CD8-positive, alpha-beta T cell (primary cell): ENCODE measurements at regions of chr14 and their contacts with region 1.

Region 1: GRCh38 chr14:99266181-99267178 is 5.5 kb downstream of the BCL11B start:
- DNase-seq: peak; percentile 85 to 93 (median 91)
- ATAC-seq: peak; percentile 24
- H3K4me3 ChIP-seq: peak overlapping the region; percentile 87 to 88
- H3K4me3 Mint-ChIP-seq: peak overlapping the region; percentile 100
- H3K27ac ChIP-seq: peak overlapping the region; percentile 96 to 97
- H3K27ac Mint-ChIP-seq: peak overlapping the region; percentile 100
- H3K4me1 ChIP-seq: peaks cover 40% of the 10 kb centered on the region
- H3K4me1 Mint-ChIP-seq: peaks cover 64% of the 10 kb centered on the region
- H3K27me3 ChIP-seq: no peaks in the 10 kb centered on the region
- H3K27me3 Mint-ChIP-seq: no peaks in the 10 kb centered on the region
- CTCF ChIP-seq: peak; percentile 99

Region 2: DNA sequence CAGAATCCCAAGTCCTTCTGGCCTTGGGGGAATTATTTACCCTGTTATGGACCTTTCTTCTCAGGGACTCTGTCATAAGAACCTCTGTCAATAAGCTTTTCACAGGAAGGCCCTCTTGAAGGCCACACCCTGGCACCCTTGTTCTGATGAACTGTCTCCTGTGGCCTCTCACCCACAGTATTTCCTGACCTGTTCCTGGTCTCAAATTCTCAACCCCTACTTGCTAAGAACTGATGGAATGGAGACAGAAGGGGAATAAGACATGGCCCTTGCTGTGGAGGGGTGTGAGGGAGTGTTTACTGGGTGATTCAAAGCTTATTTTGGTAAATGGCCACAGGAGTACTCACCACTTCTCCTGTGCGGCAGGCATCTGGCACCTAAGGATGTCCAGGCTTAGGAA is 1077.4 kb before region 1 on chr14:
- CTCF ChIA-PET with region 1: interaction called, 7 read pairs
- POLR2A ChIA-PET with region 1: interaction called, 10 read pairs
- intact Hi-C with region 1: loop called in 1 of 2 experiments (anchors 2 kb)
- DNase-seq: peak in 3 of 9 experiments; percentile 47 to 71 (median 70)
- ATAC-seq: peak; percentile 34
- H3K4me3 ChIP-seq: peak overlapping the region; percentile 13 to 20
- H3K4me3 Mint-ChIP-seq: peak overlapping the region; percentile 67
- H3K27ac ChIP-seq: peak overlapping the region; percentile 78 to 81
- H3K27ac Mint-ChIP-seq: peak overlapping the region; percentile 95
- H3K4me1 ChIP-seq: peaks cover 99% of the 10 kb centered on the region
- H3K4me1 Mint-ChIP-seq: peaks cover 98% of the 10 kb centered on the region
- H3K27me3 ChIP-seq: no peaks in the 10 kb centered on the region
- H3K27me3 Mint-ChIP-seq: no peaks in the 10 kb centered on the region
- CTCF ChIP-seq: no peak

Region 3: GRCh38 chr14:98444077-98444476 is 822.4 kb before region 1 on chr14:
- CTCF ChIA-PET with region 1: no interaction called
- POLR2A ChIA-PET with region 1: interaction called, 3 read pairs
- intact Hi-C with region 1: loop called (anchors 1 to 5 kb)
- DNase-seq: peak; percentile 9 to 79 (median 51)
- ATAC-seq: peak; percentile 95
- H3K4me3 ChIP-seq: peak overlapping the region in 1 of 2 experiments; percentile 18
- H3K4me3 Mint-ChIP-seq: peak overlapping the region; percentile 68
- H3K27ac ChIP-seq: peak overlapping the region; percentile 67 to 78
- H3K27ac Mint-ChIP-seq: peak overlapping the region; percentile 100
- H3K4me1 ChIP-seq: peaks cover 38% of the 10 kb centered on the region
- H3K4me1 Mint-ChIP-seq: peaks cover 53% of the 10 kb centered on the region
- H3K27me3 ChIP-seq: no peaks in the 10 kb centered on the region
- H3K27me3 Mint-ChIP-seq: no peaks in the 10 kb centered on the region
- CTCF ChIP-seq: no peak

Region 4: DNA sequence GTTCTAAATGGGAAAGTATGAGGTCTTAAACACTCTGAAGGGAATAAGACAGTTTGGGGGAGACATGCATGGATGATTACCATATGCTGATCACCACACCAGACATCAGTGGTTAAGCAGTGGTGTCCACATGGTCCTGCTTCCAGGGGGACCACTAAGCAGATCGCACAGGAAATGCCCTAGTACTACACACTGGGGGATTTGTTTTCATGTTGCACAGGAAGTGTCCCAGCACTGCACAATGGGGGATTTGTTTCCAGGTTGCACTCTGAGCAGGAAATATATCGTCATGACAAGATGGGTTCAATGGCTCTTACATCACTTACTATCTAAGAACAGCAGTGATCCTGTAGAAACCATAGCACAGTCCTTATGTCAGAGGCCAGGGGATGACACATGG is 240.0 kb before region 1 on chr14:
- CTCF ChIA-PET with region 1: no interaction called
- POLR2A ChIA-PET with region 1: no interaction called
- intact Hi-C with region 1: no loop called
- DNase-seq: peak in 2 of 9 experiments; percentile 22 to 44
- ATAC-seq: no peak
- H3K4me3 ChIP-seq: no peak overlapping the region
- H3K4me3 Mint-ChIP-seq: no peak overlapping the region
- H3K27ac ChIP-seq: no peak overlapping the region
- H3K27ac Mint-ChIP-seq: no peak overlapping the region
- H3K4me1 ChIP-seq: no peaks in the 10 kb centered on the region
- H3K4me1 Mint-ChIP-seq: peaks cover 22% of the 10 kb centered on the region
- H3K27me3 ChIP-seq: no peaks in the 10 kb centered on the region
- H3K27me3 Mint-ChIP-seq: no peaks in the 10 kb centered on the region
- CTCF ChIP-seq: no peak

Region 5: DNA sequence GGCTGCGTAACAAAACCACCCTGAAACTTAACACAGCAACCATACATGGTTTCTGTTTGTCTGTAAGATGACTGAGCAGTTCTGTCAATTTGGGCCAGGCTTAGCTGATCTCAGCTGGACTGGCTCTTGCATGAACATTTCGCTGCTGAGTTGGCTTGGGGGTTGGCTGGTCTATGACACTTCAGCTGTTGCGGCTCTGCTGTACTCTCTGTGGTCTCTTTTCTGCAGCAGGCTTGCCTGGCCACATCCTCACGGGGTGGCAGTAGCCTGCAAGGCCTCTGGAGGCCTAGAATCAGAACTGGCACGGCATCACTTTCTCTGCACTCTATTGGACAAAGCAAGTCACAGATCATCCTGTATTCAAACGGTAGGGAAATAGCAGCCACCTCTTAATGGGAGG is 210.7 kb before region 1 on chr14:
- CTCF ChIA-PET with region 1: interaction called, 3 read pairs
- POLR2A ChIA-PET with region 1: no interaction called
- intact Hi-C with region 1: loop called (anchors 5 to 10 kb)
- DNase-seq: peak; percentile 34 to 88 (median 64)
- ATAC-seq: peak; percentile 92
- H3K4me3 ChIP-seq: no peak overlapping the region
- H3K4me3 Mint-ChIP-seq: peak overlapping the region; percentile 7
- H3K27ac ChIP-seq: peak overlapping the region in 1 of 2 experiments; percentile 9
- H3K27ac Mint-ChIP-seq: peak overlapping the region; percentile 68
- H3K4me1 ChIP-seq: peaks cover 23% of the 10 kb centered on the region
- H3K4me1 Mint-ChIP-seq: peaks cover 32% of the 10 kb centered on the region
- H3K27me3 ChIP-seq: no peaks in the 10 kb centered on the region
- H3K27me3 Mint-ChIP-seq: no peaks in the 10 kb centered on the region
- CTCF ChIP-seq: no peak

Region 6: DNA sequence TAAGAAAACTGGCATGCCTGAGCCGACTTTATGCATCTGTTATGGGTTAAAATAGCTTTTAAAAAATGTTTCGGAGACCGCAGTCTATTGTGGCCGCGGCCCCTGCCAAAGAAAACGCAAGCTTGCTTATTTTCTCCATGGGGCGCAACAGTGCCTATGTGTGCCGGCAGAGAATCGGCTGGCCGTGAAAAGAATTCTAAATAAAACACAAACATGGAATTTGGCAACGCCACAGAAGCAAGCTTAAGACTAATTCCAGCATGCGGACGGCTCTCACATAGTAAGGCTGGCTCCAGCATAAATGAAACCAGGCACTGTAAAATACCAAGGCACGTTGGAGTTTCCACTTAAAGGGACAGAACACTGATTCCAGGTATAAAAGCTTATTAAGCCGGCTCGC is 51.2 kb before region 1 on chr14:
- CTCF ChIA-PET with region 1: interaction called, 10 read pairs
- POLR2A ChIA-PET with region 1: interaction called, 2,179 read pairs
- intact Hi-C with region 1: no loop called
- DNase-seq: no peak
- ATAC-seq: no peak
- H3K4me3 ChIP-seq: peak overlapping the region; percentile 11 to 13
- H3K4me3 Mint-ChIP-seq: peak overlapping the region; percentile 78
- H3K27ac ChIP-seq: peak overlapping the region; percentile 2 to 50
- H3K27ac Mint-ChIP-seq: peak overlapping the region; percentile 99
- H3K4me1 ChIP-seq: peaks cover 94% of the 10 kb centered on the region
- H3K4me1 Mint-ChIP-seq: peaks cover 94% of the 10 kb centered on the region
- H3K27me3 ChIP-seq: no peaks in the 10 kb centered on the region
- H3K27me3 Mint-ChIP-seq: no peaks in the 10 kb centered on the region
- CTCF ChIP-seq: no peak

Region 7: GRCh38 chr14:99245564-99246511 is 20.6 kb before region 1 on chr14:
- CTCF ChIA-PET with region 1: interaction called, 284 read pairs
- POLR2A ChIA-PET with region 1: interaction called, 2,179 read pairs
- intact Hi-C with region 1: loop called (anchors 2 kb)
- DNase-seq: peak in 3 of 9 experiments; percentile 45 to 58 (median 50)
- ATAC-seq: no peak
- H3K4me3 ChIP-seq: peak overlapping the region; percentile 37 to 38
- H3K4me3 Mint-ChIP-seq: peak overlapping the region; percentile 85
- H3K27ac ChIP-seq: peak overlapping the region; percentile 79 to 96
- H3K27ac Mint-ChIP-seq: peak overlapping the region; percentile 99
- H3K4me1 ChIP-seq: peaks cover 85% of the 10 kb centered on the region
- H3K4me1 Mint-ChIP-seq: peaks cover 87% of the 10 kb centered on the region
- H3K27me3 ChIP-seq: no peaks in the 10 kb centered on the region
- H3K27me3 Mint-ChIP-seq: no peaks in the 10 kb centered on the region
- CTCF ChIP-seq: no peak

Region 8: DNA sequence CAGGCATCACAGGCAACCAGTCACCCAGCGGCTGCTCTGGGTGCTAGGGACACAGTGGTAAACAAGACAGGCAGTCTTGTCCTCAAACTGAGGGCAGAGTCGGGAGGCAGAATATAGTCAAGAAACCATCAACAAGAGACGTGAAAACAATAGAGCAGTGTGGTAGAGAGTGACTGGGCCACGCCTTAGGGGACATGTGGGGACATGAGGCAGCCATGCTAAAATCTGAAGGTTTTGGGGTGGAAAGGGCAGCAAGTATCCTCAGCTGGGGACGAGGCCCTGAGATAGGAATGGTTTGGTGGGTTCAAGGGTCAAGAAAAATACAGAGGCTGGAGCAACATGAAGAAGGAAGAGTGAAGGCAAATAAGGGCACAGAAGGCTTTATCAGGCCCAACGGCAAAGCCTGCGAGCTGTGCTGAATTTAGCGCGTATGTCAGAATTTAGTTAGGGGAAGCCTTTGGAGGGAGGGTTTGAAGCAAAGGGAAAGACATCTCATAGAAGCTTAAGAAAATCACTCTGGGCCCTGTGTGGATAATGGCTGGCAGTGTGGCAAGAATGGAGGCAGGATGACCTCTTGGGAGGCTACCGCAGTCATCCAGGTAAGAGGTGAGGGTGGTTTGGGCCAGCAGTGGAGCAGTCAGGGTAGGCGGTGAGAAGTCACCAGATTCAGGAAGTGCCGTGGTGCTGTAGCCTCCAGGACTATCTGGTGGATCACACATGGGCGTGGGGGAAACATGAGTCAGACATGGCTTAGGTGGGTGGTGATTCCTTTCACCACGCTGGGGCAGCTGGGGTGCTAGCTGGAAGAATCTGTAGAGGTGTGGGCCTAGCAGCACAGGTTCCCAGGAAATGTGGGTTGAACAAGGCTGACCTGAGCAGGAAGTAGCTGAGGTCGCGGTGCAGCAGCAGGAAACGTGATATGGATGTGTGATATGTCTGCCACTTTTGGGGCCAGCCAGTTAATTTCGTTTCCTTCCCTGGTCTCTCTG is 801.8 kb after region 1 on chr14:
- CTCF ChIA-PET with region 1: no interaction called
- POLR2A ChIA-PET with region 1: interaction called, 3 read pairs
- intact Hi-C with region 1: loop called in 1 of 2 experiments (anchors 10 kb)
- DNase-seq: peak; percentile 70 to 98 (median 88)
- ATAC-seq: peak; percentile 50
- H3K4me3 ChIP-seq: peak overlapping the region; percentile 73 to 85
- H3K4me3 Mint-ChIP-seq: peak overlapping the region; percentile 100
- H3K27ac ChIP-seq: peak overlapping the region; percentile 83 to 87
- H3K27ac Mint-ChIP-seq: peak overlapping the region; percentile 99
- H3K4me1 ChIP-seq: peaks cover 59% of the 10 kb centered on the region
- H3K4me1 Mint-ChIP-seq: peaks cover 82% of the 10 kb centered on the region
- H3K27me3 ChIP-seq: no peaks in the 10 kb centered on the region
- H3K27me3 Mint-ChIP-seq: no peaks in the 10 kb centered on the region
- CTCF ChIP-seq: no peak